H1 (cell line): ENCODE measurements at regions of chr2 and their contacts with region 1.

Region 1: GRCh38 chr2:101759162-101759561 is 61.7 kb downstream of the MAP4K4 start:
- DNase-seq: no peak
- H3K4me3 ChIP-seq: no peak overlapping the region
- H3K27ac ChIP-seq: no peak overlapping the region
- H3K4me1 ChIP-seq: peaks cover 8 to 20% (median 17%) of the 10 kb centered on the region in 4 experiments; a peak in 6 of 7 replicates
- H3K27me3 ChIP-seq: no peaks in the 10 kb centered on the region
- CTCF ChIP-seq: no peak
- EP300 ChIP-seq: no peak
- POLR2A ChIP-seq: no peak
- RAD21 ChIP-seq: no peak

Region 2: GRCh38 chr2:101770726-101771125 is 11.6 kb after region 1 on chr2:
- CTCF ChIA-PET with region 1: interaction called, 17 read pairs
- POLR2A ChIA-PET with region 1: interaction called, 4 read pairs
- DNase-seq: no peak
- H3K4me3 ChIP-seq: no peak overlapping the region
- H3K27ac ChIP-seq: no peak overlapping the region
- H3K4me1 ChIP-seq: peaks cover 6 to 40% (median 22%) of the 10 kb centered on the region in 4 experiments; a peak in 4 of 7 replicates
- H3K27me3 ChIP-seq: no peaks in the 10 kb centered on the region
- CTCF ChIP-seq: peak in 2 of 3 experiments; percentile 32 to 33; a peak in 2 of 4 replicates
- EP300 ChIP-seq: no peak
- POLR2A ChIP-seq: no peak
- RAD21 ChIP-seq: peak in 1 of 2 experiments; percentile 24; a peak in 3 of 4 replicates

Region 3: DNA sequence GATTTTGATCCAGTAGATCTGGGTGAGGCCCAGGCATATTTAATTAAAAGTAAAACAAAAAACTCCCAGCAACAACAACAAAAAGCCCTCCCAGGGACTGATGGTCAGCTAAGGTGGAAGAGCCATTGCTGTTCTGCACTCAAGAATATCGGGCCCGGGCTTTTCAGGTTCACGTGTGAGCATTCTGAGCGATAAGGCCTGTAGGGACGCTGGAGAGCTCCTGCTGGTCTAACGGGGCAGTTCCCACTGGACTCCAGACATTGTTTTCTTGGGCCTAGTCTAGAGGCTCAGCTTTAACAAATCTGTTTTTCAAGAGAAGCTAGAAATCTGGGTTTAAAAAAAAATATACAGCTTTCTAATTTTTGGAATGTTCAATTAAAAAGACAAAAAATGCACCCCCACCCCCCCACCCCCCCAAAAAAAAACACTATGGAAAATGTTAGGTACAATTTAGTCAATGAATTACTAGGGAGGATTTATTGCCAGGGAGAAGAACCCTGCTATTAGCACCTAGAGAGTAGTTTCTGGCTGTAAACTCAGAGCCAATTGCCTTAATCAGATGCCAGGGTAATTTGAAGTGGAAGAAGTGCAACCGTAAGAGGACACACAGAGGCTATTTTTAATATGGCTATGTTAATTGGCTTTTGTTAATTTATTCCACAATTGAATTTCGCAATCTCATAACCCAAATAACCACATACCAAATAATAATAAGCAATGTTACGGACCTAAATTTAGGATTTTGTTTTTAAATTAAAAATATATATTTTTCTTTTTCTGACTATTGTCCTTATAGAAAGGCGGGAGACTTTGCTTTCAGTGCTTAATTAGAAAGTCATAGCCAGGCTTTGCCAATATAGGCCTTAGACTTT is 17.2 kb after region 1 on chr2:
- CTCF ChIA-PET with region 1: interaction called, 17 read pairs
- POLR2A ChIA-PET with region 1: no interaction called
- DNase-seq: no peak
- H3K4me3 ChIP-seq: no peak overlapping the region
- H3K27ac ChIP-seq: no peak overlapping the region
- H3K4me1 ChIP-seq: peaks cover 13 to 38% (median 27%) of the 10 kb centered on the region in 4 experiments
- H3K27me3 ChIP-seq: no peaks in the 10 kb centered on the region
- CTCF ChIP-seq: peak; percentile 48 to 59 (median 48)
- EP300 ChIP-seq: no peak
- POLR2A ChIP-seq: no peak
- RAD21 ChIP-seq: no peak; a peak in 2 of 4 replicates